ENCODE measurements at regions of chr1 and their contacts with region 1.

Region 1: GRCh38 chr1:64675718-64676345 is 69.0 kb upstream of the RAVER2 start:
- DNase-seq: no peak
- H3K4me3 ChIP-seq: no peak overlapping the region
- H3K27ac ChIP-seq: no peak overlapping the region
- H3K4me1 ChIP-seq: no peaks in the 10 kb centered on the region
- H3K27me3 ChIP-seq: no peaks in the 10 kb centered on the region
- CTCF ChIP-seq: peak in 1 of 3 experiments; percentile 56; a peak in 1 of 4 replicates
- EP300 ChIP-seq: no peak
- POLR2A ChIP-seq: no peak
- RAD21 ChIP-seq: peak; percentile 22 to 31; a peak in 2 of 4 replicates

Region 2: DNA sequence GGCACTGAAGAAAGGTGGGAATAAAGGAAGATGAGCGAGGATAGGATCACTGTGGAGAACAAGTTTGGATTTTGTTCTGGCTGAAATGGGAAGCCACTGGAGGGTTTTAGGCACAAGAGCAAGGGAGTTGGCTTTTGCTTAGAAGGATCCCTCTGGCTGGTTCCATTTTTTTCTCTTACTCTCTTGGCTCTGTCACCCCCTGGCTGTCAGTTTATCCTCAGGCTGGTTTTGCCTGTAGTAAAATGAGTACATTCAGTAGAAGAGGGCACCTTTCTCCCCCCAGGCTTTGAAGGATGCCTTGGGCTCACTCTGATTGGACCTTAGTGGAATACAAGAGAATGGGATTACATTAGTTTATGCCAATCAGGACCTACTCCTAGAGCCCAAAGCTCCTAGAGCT is 188.8 kb before region 1 on chr1:
- CTCF ChIA-PET with region 1: interaction called, 10 read pairs
- POLR2A ChIA-PET with region 1: no interaction called
- DNase-seq: no peak
- H3K4me3 ChIP-seq: no peak overlapping the region
- H3K27ac ChIP-seq: no peak overlapping the region
- H3K4me1 ChIP-seq: peaks cover 9 to 31% (median 19%) of the 10 kb centered on the region in 4 experiments
- H3K27me3 ChIP-seq: no peaks in the 10 kb centered on the region
- CTCF ChIP-seq: peak in 2 of 3 experiments; percentile 42 to 59; a peak in 3 of 4 replicates
- EP300 ChIP-seq: no peak
- POLR2A ChIP-seq: no peak
- RAD21 ChIP-seq: peak; percentile 57 to 71

Region 3: DNA sequence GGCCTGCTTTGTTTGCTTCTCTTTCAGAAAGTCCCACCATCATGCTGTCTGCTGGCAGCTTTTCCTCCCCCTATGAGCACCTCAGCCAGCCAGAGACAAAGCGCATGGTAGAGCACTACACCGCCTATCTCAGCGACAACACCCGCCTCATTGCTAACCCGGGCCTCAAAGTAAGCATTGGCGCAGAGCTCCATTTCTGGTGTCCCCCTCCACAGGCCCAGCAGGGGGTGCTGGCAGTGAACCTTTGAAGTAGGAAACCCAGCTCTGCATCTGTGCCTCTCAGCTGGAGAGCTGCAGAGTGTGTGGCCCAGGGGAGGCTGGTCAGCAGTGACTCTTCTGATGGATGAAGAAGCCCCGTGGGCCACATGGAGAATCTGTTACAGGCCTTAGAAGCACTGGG is 12.2 kb before region 1 on chr1:
- CTCF ChIA-PET with region 1: interaction called, 72 read pairs
- POLR2A ChIA-PET with region 1: interaction called, 3 read pairs
- DNase-seq: peak in 1 of 2 experiments; percentile 52
- H3K4me3 ChIP-seq: no peak overlapping the region
- H3K27ac ChIP-seq: no peak overlapping the region
- H3K4me1 ChIP-seq: peaks cover 0 to 2% (median 0%) of the 10 kb centered on the region in 4 experiments; a peak in 1 of 7 replicates
- H3K27me3 ChIP-seq: no peaks in the 10 kb centered on the region
- CTCF ChIP-seq: peak; percentile 8 to 30 (median 15); a peak in 3 of 4 replicates
- EP300 ChIP-seq: no peak
- POLR2A ChIP-seq: no peak
- RAD21 ChIP-seq: peak in 1 of 2 experiments; percentile 22; a peak in 1 of 4 replicates

Region 4: DNA sequence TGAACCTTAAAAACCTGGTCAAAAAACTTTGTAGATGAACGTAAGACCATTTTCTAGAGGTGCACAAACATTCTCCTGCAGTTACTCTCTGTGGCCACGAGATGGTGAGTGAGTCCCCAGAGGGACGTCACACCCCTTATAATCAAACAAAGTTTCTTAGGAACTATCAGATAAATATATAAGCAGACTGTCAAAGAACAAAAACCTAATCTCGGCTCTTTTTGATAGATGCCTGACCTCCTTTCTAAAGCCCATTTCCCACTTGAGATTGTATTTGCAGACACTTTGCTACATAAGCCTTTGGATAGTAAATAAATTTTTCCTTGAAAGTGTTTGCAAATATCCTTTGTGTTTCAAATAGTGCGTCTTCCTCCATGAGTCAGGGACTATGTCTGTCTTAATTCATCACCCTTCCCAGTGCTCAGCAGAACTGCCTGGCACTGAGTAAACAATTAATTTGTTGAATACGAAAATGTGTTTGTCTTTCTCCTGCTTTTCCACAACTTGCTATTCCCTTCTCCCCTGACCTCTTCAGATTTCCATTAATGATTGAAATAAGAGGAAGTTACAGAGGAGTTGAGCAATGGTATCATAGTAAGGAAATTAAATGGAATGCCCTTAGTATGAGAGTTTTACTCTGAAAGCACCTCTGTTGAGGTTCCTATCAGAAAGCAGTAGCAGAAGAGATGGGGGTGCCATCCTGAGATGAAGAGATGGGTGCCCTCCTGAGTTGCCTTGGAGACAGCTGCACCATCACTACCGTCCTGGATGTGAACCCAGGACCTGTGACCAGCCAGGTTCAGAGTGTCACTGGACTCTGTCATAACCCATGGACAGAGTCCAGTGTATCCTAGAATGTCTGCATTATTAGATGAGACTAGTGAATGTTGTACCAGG is 11.2 kb after region 1 on chr1:
- CTCF ChIA-PET with region 1: interaction called, 14 read pairs
- POLR2A ChIA-PET with region 1: no interaction called
- DNase-seq: no peak
- H3K4me3 ChIP-seq: no peak overlapping the region
- H3K27ac ChIP-seq: no peak overlapping the region
- H3K4me1 ChIP-seq: peaks cover 0 to 5% (median 2%) of the 10 kb centered on the region in 4 experiments; a peak in 3 of 7 replicates
- H3K27me3 ChIP-seq: no peaks in the 10 kb centered on the region
- CTCF ChIP-seq: peak; percentile 56 to 66 (median 58)
- EP300 ChIP-seq: no peak
- POLR2A ChIP-seq: no peak
- RAD21 ChIP-seq: peak; percentile 67 to 70

Region 5: DNA sequence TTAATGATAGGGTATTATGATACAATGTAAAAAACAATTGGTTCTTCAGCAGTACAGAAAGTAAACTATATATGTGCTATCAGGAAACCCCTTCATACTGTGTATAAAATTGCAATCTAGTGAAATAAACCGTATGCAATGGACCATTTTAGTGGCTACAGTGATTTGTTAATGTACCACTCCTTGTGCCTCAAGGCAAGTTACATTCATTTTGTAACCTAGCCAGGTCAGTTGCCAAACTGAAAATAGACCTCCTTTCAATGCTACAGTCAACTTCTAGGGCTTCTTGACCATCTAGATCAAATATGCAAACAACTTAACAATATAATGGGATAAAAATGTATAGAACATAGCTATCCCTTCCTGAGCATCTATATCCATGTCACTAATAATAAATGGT is 17.1 kb after region 1 on chr1:
- CTCF ChIA-PET with region 1: interaction called, 14 read pairs
- POLR2A ChIA-PET with region 1: interaction called, 3 read pairs
- DNase-seq: no peak
- H3K4me3 ChIP-seq: no peak overlapping the region
- H3K27ac ChIP-seq: no peak overlapping the region
- H3K4me1 ChIP-seq: peaks cover 0 to 3% (median 0%) of the 10 kb centered on the region in 4 experiments; a peak in 1 of 7 replicates
- H3K27me3 ChIP-seq: no peaks in the 10 kb centered on the region
- CTCF ChIP-seq: no peak
- EP300 ChIP-seq: no peak
- POLR2A ChIP-seq: no peak
- RAD21 ChIP-seq: no peak

Region 6: GRCh38 chr1:64703600-64703999 is 27.8 kb after region 1 on chr1:
- CTCF ChIA-PET with region 1: no interaction called
- POLR2A ChIA-PET with region 1: no interaction called
- DNase-seq: no peak
- H3K4me3 ChIP-seq: no peak overlapping the region
- H3K27ac ChIP-seq: no peak overlapping the region
- H3K4me1 ChIP-seq: peaks cover 0 to 6% (median 4%) of the 10 kb centered on the region in 4 experiments; a peak in 4 of 7 replicates
- H3K27me3 ChIP-seq: no peaks in the 10 kb centered on the region; a peak in 1 of 7 replicates
- CTCF ChIP-seq: no peak
- EP300 ChIP-seq: no peak
- POLR2A ChIP-seq: no peak
- RAD21 ChIP-seq: no peak

Region 7: GRCh38 chr1:64823691-64824476 is 148.1 kb after region 1 on chr1:
- CTCF ChIA-PET with region 1: interaction called, 12 read pairs
- POLR2A ChIA-PET with region 1: no interaction called
- DNase-seq: peak in 1 of 2 experiments; percentile 70
- H3K4me3 ChIP-seq: no peak overlapping the region
- H3K27ac ChIP-seq: no peak overlapping the region
- H3K4me1 ChIP-seq: peaks cover 0 to 2% (median 0%) of the 10 kb centered on the region in 4 experiments; a peak in 1 of 7 replicates
- H3K27me3 ChIP-seq: no peaks in the 10 kb centered on the region
- CTCF ChIP-seq: peak in 2 of 3 experiments; percentile 67 to 82; a peak in 3 of 4 replicates
- EP300 ChIP-seq: no peak
- POLR2A ChIP-seq: no peak
- RAD21 ChIP-seq: peak; percentile 89 to 91

Region 8: DNA sequence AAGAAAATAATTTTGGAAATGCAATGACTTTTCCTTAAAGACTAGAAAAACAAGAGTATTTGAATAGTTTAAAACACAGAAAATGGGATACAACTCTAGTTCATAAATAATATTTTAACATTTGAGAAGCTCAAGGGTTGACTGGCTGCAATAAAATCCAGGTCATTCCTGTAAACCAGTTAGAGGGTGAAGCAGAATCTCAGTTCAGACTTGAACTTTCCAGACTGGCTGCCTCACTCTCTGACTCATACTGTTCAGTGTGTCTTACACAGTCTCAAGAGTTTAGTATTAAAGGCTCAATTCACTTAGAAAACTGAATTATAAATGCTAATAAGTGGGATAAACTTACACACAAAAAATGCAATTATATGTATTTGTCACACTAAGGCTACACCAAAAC is 158.9 kb after region 1 on chr1:
- CTCF ChIA-PET with region 1: no interaction called
- POLR2A ChIA-PET with region 1: no interaction called
- DNase-seq: no peak
- H3K4me3 ChIP-seq: no peak overlapping the region
- H3K27ac ChIP-seq: no peak overlapping the region
- H3K4me1 ChIP-seq: peaks cover 0 to 6% (median 0%) of the 10 kb centered on the region in 4 experiments; a peak in 2 of 7 replicates
- H3K27me3 ChIP-seq: no peaks in the 10 kb centered on the region
- CTCF ChIP-seq: no peak
- EP300 ChIP-seq: no peak
- POLR2A ChIP-seq: no peak
- RAD21 ChIP-seq: no peak

Measured in H1 (cell line).